Mammary epithelial cell (primary cell): ENCODE measurements at regions of chr9 and their contacts with region 1.

Region 1: DNA sequence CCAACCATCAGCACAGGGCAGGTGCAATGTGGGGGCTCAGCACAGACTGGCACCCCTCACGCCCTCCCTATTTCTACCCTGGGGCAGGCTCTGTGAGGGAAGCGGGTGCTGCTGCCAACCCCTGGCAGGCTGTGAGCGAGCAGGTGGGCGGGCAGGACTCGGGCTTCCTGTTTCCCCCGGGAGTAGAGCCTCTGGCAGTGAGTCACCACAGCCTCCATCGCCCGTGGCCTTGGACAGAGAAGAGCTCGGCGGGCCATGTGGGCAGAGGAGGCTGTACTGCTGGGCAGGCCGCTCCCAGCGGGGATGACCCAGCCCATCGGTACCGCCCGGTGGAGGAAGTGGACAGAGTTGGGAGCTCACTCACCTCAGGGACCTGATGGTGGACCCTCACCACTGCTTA is 16.6 kb downstream of the KCNT1 start:
- DNase-seq: peak; percentile 20
- H3K4me3 ChIP-seq: no peak overlapping the region
- H3K27ac ChIP-seq: no peak overlapping the region
- H3K4me1 ChIP-seq: no peaks in the 10 kb centered on the region
- H3K27me3 ChIP-seq: peaks cover 16% of the 10 kb centered on the region
- CTCF ChIP-seq: no peak

Region 2: GRCh38 chr9:134641173-134641985 is 1077.2 kb before region 1 on chr9 and contains the start of gene COL5A1:
- CTCF ChIA-PET with region 1: no interaction called
- dilution Hi-C with region 1: loop called (anchors 10 kb)
- in situ Hi-C with region 1: no loop called
- intact Hi-C with region 1: no loop called
- DNase-seq: peak; percentile 86
- H3K4me3 ChIP-seq: peak within 1 kb of the TSS in 2 of 3 experiments; percentile 30 to 32
- H3K27ac ChIP-seq: no peak within 1 kb of the TSS
- H3K4me1 ChIP-seq: peaks cover 5% of the 10 kb centered on the region
- H3K27me3 ChIP-seq: peaks cover 4% of the 10 kb centered on the region
- CTCF ChIP-seq: no peak
- total RNA-seq, gene COL5A1: 7.2 to 22.8 TPM

Region 3: DNA sequence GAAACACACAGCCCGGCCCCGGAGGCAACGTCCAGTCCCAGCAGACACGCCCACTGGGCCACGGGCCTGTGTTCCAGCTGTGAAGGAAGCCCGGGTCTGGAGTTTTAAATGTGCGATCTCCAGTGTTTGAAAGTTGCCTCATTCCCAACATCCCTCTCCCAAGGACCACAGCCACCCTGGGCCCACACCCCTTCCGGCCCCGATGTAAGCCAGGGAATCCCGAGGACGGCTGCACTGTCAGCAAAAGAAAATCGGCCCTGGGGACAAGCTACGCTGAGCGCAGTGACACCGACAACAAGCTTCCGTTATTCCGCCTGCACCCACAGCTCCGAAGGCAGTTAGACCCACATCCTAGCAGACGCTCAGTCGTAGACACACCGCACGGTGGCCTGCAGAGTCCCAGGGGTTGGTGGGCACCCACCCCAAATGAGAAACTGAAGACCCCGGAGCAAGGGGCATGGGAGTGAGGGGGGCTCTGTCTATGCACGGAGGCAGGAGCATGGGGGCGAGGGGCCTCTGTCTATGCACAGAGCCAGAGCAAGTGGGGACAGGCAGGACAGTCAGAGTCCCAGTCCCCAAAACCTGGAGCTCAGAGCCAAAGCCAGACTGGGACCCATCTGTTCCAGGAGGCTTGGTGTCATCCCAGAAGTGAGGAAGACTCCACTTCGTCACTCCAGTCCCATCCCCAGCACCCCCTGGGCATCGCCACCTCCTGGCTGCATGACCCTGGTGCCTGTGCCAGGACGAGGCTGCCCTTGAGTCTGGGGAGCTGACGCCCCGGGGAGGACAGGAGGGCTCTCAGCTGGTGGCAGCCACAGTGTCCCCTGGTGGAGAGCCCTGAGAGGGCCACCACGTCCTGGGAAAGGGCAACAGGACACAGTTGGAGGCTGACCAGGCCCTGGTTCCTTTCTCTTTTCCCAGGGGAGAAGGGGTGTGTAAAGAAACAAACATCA is 102.7 kb before region 1 on chr9:
- CTCF ChIA-PET with region 1: no interaction called
- dilution Hi-C with region 1: loop called (anchors 5 kb)
- in situ Hi-C with region 1: no loop called
- intact Hi-C with region 1: no loop called
- DNase-seq: no peak
- H3K4me3 ChIP-seq: no peak overlapping the region
- H3K27ac ChIP-seq: no peak overlapping the region
- H3K4me1 ChIP-seq: no peaks in the 10 kb centered on the region
- H3K27me3 ChIP-seq: no peaks in the 10 kb centered on the region
- CTCF ChIP-seq: no peak

Region 4: DNA sequence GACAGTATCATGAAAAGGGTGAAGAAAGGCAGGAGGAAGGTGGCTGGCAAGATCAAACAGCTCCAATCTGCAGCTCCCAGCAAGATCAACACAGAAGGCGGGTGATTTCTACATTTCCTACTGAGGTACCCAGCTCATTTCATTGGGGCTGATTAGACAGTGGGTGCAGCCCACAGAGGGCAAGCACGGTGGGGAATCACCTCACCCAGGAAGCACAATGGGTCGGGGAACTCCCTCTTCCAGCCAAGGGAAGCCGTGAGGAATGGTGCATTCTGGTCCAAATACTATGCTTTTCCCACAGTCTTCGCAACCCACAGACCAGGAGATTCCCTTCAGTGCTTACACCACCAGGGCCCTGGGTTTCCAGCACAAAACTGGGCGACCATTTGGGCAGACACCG is 121.9 kb after region 1 on chr9:
- CTCF ChIA-PET with region 1: no interaction called
- dilution Hi-C with region 1: loop called (anchors 5 kb)
- in situ Hi-C with region 1: no loop called
- intact Hi-C with region 1: no loop called
- DNase-seq: no peak
- H3K4me3 ChIP-seq: no peak overlapping the region
- H3K27ac ChIP-seq: no peak overlapping the region
- H3K4me1 ChIP-seq: no peaks in the 10 kb centered on the region
- H3K27me3 ChIP-seq: no peaks in the 10 kb centered on the region
- CTCF ChIP-seq: no peak

Region 5: DNA sequence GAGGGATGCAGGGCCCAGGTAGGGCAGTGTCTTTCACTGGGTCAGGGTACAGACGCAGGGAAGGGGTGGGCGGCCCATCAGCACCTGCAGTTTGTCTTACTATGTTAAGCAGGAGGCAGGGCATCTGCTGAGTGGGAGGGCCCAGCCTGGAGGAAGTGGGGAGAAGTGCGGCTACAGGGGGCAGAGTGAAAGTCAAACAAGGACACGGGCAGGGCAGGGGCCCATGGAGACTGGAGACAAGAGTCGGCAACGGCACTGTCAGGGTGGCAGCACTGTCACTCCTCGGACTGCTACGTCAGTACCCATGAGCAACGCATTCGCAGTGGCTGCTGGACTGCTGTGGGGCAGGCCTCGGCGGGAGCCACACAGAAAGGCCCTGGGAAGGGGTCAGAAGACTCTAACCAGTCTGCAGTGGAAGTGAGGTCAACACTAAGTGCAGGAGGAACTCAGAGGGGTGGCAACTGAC is 169.0 kb after region 1 on chr9:
- CTCF ChIA-PET with region 1: no interaction called
- dilution Hi-C with region 1: no loop called
- in situ Hi-C with region 1: no loop called
- intact Hi-C with region 1: no loop called
- DNase-seq: no peak
- H3K4me3 ChIP-seq: no peak overlapping the region
- H3K27ac ChIP-seq: no peak overlapping the region
- H3K4me1 ChIP-seq: peaks cover 74% of the 10 kb centered on the region
- H3K27me3 ChIP-seq: no peaks in the 10 kb centered on the region
- CTCF ChIP-seq: no peak

Region 6: DNA sequence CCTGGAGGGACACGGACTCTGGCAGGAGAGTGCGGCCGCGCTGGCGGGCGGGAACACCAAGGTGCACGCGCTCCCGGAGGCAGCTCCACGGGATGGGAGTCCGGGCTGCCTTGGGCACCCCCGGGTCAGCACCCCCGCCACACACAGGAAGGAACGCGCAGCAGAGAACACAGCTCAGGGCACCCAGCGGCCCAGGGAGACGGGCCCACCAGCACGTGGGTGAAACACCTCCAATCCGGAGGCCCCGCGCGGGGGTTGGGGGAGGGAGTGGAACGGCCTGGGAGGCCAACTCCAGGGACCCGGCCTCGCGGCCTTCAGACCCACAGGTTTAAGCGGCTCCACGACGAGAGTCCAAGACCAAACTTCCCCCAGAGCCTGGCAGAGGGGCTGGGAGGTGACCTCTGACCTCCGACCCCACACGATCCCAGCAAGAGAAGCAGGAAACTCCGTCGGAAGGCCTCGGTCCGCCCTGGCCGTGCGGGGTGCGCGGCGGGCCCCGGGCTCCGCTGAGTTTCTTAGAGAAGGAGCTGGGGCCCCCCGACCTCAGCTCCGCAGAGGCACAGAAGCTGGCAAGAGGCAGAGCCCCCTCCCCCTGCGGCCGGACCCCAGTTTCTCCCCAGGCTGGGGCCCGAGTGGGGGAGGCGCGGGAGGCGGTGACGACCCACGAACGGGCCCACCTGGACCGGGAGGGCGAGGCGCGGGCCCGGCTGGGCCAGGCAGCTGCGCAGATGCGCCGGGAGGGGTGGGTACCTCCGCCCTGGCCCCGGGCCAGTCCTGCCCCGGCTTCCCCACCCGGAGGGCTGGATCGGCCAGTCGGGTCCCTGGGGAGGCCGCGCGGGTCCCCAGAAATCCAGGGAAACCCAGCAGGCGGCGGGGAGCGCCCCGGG is 375.6 kb after region 1 on chr9:
- CTCF ChIA-PET with region 1: no interaction called
- dilution Hi-C with region 1: no loop called
- in situ Hi-C with region 1: no loop called
- intact Hi-C with region 1: no loop called
- DNase-seq: peak; percentile 62
- H3K4me3 ChIP-seq: peak overlapping the region; percentile 65 to 77 (median 70)
- H3K27ac ChIP-seq: peak overlapping the region; percentile 33
- H3K4me1 ChIP-seq: peaks cover 35% of the 10 kb centered on the region
- H3K27me3 ChIP-seq: no peaks in the 10 kb centered on the region
- CTCF ChIP-seq: no peak

Region 7: GRCh38 chr9:136267261-136268111 is 548.9 kb after region 1 on chr9:
- CTCF ChIA-PET with region 1: no interaction called
- dilution Hi-C with region 1: loop called (anchors 10 kb)
- in situ Hi-C with region 1: no loop called
- intact Hi-C with region 1: no loop called
- DNase-seq: peak; percentile 66
- H3K4me3 ChIP-seq: peak overlapping the region; percentile 41 to 59 (median 55)
- H3K27ac ChIP-seq: no peak overlapping the region
- H3K4me1 ChIP-seq: peaks cover 5% of the 10 kb centered on the region
- H3K27me3 ChIP-seq: peaks cover 3% of the 10 kb centered on the region
- CTCF ChIP-seq: peak in 1 of 2 donors; percentile 40